Dendritic cell treated with granulocyte-macrophage colony-stimulating factor and Interleukin-4, amounts not matched to agents 40 ng/mL and 50 ng/mL, for 4 days (primary cell): ENCODE measurements at regions of chr16 and their contacts with region 1.

Region 1: GRCh38 chr16:79601931-79602627 is 1.5 kb upstream of the MAF start:
- H3K4me3 Mint-ChIP-seq: peak overlapping the region; percentile 95
- H3K27ac Mint-ChIP-seq: peak overlapping the region; percentile 94
- H3K4me1 Mint-ChIP-seq: peaks cover 39% of the 10 kb centered on the region
- H3K27me3 Mint-ChIP-seq: peaks cover 15% of the 10 kb centered on the region

Region 2: GRCh38 chr16:78503602-78504001 is 1098.5 kb before region 1 on chr16:
- intact Hi-C with region 1: loop called (anchors 5 kb)
- H3K4me3 Mint-ChIP-seq: no peak overlapping the region
- H3K27ac Mint-ChIP-seq: no peak overlapping the region
- H3K4me1 Mint-ChIP-seq: peaks cover 5% of the 10 kb centered on the region
- H3K27me3 Mint-ChIP-seq: no peaks in the 10 kb centered on the region

Region 3: GRCh38 chr16:78770353-78771091 is 831.6 kb before region 1 on chr16:
- intact Hi-C with region 1: loop called (anchors 5 kb)
- H3K4me3 Mint-ChIP-seq: no peak overlapping the region
- H3K27ac Mint-ChIP-seq: no peak overlapping the region
- H3K4me1 Mint-ChIP-seq: peaks cover 6% of the 10 kb centered on the region
- H3K27me3 Mint-ChIP-seq: peaks cover 5% of the 10 kb centered on the region

Region 4: GRCh38 chr16:79098907-79099306 is 503.2 kb before region 1 on chr16:
- intact Hi-C with region 1: loop called (anchors 5 kb)
- H3K4me3 Mint-ChIP-seq: no peak overlapping the region
- H3K27ac Mint-ChIP-seq: no peak overlapping the region
- H3K4me1 Mint-ChIP-seq: peaks cover 60% of the 10 kb centered on the region
- H3K27me3 Mint-ChIP-seq: peaks cover 42% of the 10 kb centered on the region

Region 5: DNA sequence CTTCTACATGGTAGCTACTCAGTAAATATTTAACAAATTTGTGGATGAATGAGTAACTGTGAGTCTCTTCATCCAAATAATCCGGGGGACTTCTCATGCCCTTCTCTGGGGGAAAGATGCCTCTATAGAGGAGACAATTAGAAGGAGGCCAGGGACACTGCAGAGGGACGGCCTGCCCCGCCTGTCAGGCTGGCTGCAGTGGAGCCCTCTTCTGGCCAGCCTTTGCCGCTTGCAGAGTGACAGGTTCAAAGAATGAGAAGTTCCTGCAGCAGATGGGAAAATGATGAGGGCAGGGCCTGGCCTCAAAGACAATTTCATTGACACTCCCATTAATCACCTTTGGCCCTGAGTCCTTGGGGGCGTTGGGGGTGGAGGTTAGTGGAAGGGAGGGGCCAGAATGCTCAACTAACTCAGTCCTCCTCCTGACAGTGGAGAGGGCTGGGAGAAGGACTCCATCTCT is 340.6 kb before region 1 on chr16:
- intact Hi-C with region 1: loop called (anchors 2 kb)
- H3K4me3 Mint-ChIP-seq: no peak overlapping the region
- H3K27ac Mint-ChIP-seq: peak overlapping the region; percentile 56
- H3K4me1 Mint-ChIP-seq: peaks cover 68% of the 10 kb centered on the region
- H3K27me3 Mint-ChIP-seq: peaks cover 19% of the 10 kb centered on the region

Region 6: DNA sequence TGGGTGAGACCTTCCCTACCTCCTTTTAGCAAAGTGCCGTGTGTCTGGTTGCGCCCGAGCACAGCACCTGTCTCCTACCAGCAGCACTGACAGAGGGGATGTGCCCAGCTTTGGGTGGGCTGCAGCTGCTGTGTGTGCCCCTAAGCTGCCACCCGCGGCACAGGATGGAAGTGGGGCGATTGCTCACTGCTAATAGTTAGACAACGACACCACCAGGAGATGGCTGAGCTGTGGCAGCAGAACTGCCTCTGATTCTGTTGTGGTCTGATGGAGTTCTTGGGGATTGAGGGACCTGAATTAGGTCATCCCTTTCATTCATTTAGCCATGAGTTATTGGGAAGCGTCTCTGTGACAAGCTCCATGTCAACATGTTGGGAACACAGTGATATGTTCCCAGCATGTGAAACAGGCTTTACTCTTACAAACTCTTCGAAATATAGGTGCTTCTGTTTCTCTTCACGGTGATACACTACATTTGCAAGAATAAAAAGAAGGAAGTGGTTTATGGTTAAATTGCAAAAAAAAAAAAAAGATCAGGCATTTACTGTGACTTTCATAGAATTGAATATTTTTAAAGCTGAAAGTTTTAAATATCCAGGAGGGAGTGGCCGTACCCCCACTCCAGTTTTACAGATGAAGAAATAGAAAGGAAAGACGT is 186.0 kb before region 1 on chr16:
- intact Hi-C with region 1: loop called (anchors 10 kb)
- H3K4me3 Mint-ChIP-seq: peak overlapping the region; percentile 15
- H3K27ac Mint-ChIP-seq: peak overlapping the region; percentile 92
- H3K4me1 Mint-ChIP-seq: peaks cover 83% of the 10 kb centered on the region
- H3K27me3 Mint-ChIP-seq: peaks cover 8% of the 10 kb centered on the region

Region 7: GRCh38 chr16:79658301-79659033 is 56.4 kb after region 1 on chr16:
- intact Hi-C with region 1: no loop called
- H3K4me3 Mint-ChIP-seq: no peak overlapping the region
- H3K27ac Mint-ChIP-seq: no peak overlapping the region
- H3K4me1 Mint-ChIP-seq: no peaks in the 10 kb centered on the region
- H3K27me3 Mint-ChIP-seq: peaks cover 1% of the 10 kb centered on the region

Region 8: GRCh38 chr16:79673635-79674034 is 71.6 kb after region 1 on chr16:
- intact Hi-C with region 1: no loop called
- H3K4me3 Mint-ChIP-seq: no peak overlapping the region
- H3K27ac Mint-ChIP-seq: no peak overlapping the region
- H3K4me1 Mint-ChIP-seq: no peaks in the 10 kb centered on the region
- H3K27me3 Mint-ChIP-seq: no peaks in the 10 kb centered on the region

Region 9: GRCh38 chr16:79770244-79771064 is 168.4 kb after region 1 on chr16:
- intact Hi-C with region 1: loop called (anchors 10 kb)
- H3K4me3 Mint-ChIP-seq: peak overlapping the region; percentile 90
- H3K27ac Mint-ChIP-seq: peak overlapping the region; percentile 77
- H3K4me1 Mint-ChIP-seq: peaks cover 27% of the 10 kb centered on the region
- H3K27me3 Mint-ChIP-seq: peaks cover 11% of the 10 kb centered on the region